ENCODE measurements at regions of chr2 and their contacts with region 1.

Region 1: GRCh38 chr2:98188351-98189049 is 101.5 kb downstream of the VWA3B start:
- DNase-seq: peak; percentile 91
- H3K4me3 ChIP-seq: no peak overlapping the region
- H3K27ac ChIP-seq: no peak overlapping the region
- H3K4me1 ChIP-seq: peaks cover 10% of the 10 kb centered on the region
- H3K27me3 ChIP-seq: no peaks in the 10 kb centered on the region
- CTCF ChIP-seq: peak; percentile 51 to 55

Region 2: DNA sequence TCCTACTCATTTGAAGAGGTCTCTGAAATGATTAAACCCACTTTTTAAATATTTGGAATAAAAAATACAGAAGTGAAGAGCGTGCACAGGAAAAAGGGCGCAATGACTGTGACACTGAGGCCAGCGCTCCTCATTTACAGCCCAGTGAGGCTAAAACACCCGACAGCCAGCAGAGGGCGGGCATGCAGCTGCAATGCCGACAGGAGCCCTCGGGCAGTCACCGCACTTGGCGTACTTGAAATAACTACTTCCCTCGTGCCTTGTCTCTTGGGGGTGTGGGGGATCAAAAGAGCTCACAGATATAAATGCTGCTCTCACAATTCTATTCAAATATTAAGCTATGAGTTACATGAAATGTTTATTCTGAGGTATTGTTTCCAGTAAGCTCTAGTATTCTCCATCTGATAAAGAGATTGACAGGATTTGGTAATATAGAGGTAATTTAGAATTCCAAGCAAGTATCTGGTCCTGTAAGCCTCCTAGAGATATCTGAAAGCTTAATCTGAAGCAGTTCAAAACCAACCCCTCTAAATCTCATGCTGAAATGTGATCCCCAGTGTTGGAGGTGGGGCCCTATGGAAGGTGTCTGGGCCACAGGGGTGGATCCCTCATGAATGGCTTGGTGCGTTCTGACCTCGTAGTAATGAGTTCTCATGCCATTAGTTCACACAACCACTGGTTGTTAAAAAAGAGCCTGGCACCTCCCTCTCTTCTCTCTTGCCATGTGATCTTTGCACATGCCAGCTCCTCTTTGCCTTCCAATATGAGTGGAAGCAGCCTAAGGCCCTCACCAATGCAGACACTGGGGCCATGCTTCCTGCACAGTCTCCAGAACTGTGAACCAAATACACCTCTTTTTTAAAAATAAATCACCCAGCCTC is 381.5 kb before region 1 on chr2:
- CTCF ChIA-PET with region 1: no interaction called
- dilution Hi-C with region 1: no loop called
- in situ Hi-C with region 1: loop called (anchors 5 to 10 kb)
- intact Hi-C with region 1: loop called (anchors 1 kb)
- DNase-seq: peak; percentile 45
- H3K4me3 ChIP-seq: no peak overlapping the region
- H3K27ac ChIP-seq: no peak overlapping the region
- H3K4me1 ChIP-seq: peaks cover 4% of the 10 kb centered on the region
- H3K27me3 ChIP-seq: no peaks in the 10 kb centered on the region
- CTCF ChIP-seq: peak; percentile 87 to 96

Region 3: GRCh38 chr2:97819754-97820153 is 368.7 kb before region 1 on chr2:
- CTCF ChIA-PET with region 1: no interaction called
- dilution Hi-C with region 1: no loop called
- in situ Hi-C with region 1: no loop called
- intact Hi-C with region 1: loop called (anchors 5 kb)
- DNase-seq: no peak
- H3K4me3 ChIP-seq: no peak overlapping the region
- H3K27ac ChIP-seq: no peak overlapping the region
- H3K4me1 ChIP-seq: no peaks in the 10 kb centered on the region
- H3K27me3 ChIP-seq: no peaks in the 10 kb centered on the region
- CTCF ChIP-seq: no peak

Region 4: GRCh38 chr2:97870396-97870843 is 318.1 kb before region 1 on chr2:
- CTCF ChIA-PET with region 1: no interaction called
- dilution Hi-C with region 1: no loop called
- in situ Hi-C with region 1: no loop called
- intact Hi-C with region 1: loop called (anchors 2 kb)
- DNase-seq: peak; percentile 82
- H3K4me3 ChIP-seq: no peak overlapping the region
- H3K27ac ChIP-seq: peak overlapping the region; percentile 85
- H3K4me1 ChIP-seq: peaks cover 42% of the 10 kb centered on the region
- H3K27me3 ChIP-seq: no peaks in the 10 kb centered on the region
- CTCF ChIP-seq: no peak

Region 5: GRCh38 chr2:98009887-98010760 is 178.4 kb before region 1 on chr2:
- CTCF ChIA-PET with region 1: no interaction called
- dilution Hi-C with region 1: loop called (anchors 10 kb)
- in situ Hi-C with region 1: no loop called
- intact Hi-C with region 1: no loop called
- DNase-seq: no peak
- H3K4me3 ChIP-seq: no peak overlapping the region
- H3K27ac ChIP-seq: no peak overlapping the region
- H3K4me1 ChIP-seq: peaks cover 7% of the 10 kb centered on the region
- H3K27me3 ChIP-seq: no peaks in the 10 kb centered on the region
- CTCF ChIP-seq: no peak

Region 6: DNA sequence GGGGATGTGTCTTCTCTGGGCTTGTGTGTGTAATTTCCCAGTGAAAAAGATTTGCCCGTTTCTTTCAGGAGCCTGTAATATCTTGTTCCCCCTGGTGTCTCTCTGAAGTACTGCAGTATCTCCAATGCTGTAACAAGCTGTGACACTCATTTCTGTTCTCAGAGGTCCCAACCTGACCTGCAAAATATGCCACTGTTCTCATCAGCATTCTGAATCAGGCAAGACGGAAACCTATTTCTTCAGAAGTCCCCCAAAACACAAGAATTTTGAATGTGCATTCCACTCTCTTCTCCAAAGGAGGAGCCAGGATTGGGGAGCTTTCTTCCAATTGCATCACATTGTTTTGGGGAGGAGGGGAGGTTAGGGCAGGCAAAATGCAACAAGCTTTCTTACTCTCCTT is 80.8 kb after region 1 on chr2:
- CTCF ChIA-PET with region 1: no interaction called
- dilution Hi-C with region 1: no loop called
- in situ Hi-C with region 1: no loop called
- intact Hi-C with region 1: loop called (anchors 10 kb)
- DNase-seq: peak; percentile 43
- H3K4me3 ChIP-seq: no peak overlapping the region
- H3K27ac ChIP-seq: no peak overlapping the region
- H3K4me1 ChIP-seq: no peaks in the 10 kb centered on the region
- H3K27me3 ChIP-seq: no peaks in the 10 kb centered on the region
- CTCF ChIP-seq: peak; percentile 78

Region 7: DNA sequence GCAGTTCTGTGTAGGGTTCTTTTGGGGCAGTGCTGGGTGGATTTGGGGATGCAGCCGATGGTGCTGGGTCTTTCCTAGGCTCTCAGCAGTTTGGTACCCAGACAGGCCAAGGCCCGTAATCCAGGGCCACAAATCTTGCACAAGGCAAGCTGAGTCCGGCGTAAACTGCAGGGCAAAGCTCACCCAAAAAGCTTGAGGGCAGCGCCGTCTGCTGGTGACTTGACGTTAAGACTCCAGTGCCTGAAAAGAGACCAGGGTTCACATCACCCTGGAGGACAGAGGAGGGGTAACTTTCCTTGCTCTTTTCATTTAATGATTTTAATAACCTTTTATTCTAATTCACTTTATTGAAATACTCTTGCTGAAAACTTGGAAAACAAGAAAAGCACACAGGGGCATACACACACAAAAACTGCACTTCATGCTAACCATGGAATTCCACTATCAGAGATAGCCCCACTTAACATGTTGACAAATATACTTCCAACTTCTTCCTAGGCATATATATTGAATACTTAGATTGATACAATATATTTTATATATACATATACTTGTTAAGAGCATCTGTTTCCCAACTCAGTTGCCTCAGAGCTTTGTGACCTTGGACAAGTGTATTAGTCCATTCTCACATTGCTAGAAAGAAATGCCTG is 196.7 kb after region 1 on chr2:
- CTCF ChIA-PET with region 1: no interaction called
- dilution Hi-C with region 1: no loop called
- in situ Hi-C with region 1: no loop called
- intact Hi-C with region 1: loop called (anchors 1 kb)
- DNase-seq: peak; percentile 64
- H3K4me3 ChIP-seq: no peak overlapping the region
- H3K27ac ChIP-seq: no peak overlapping the region
- H3K4me1 ChIP-seq: no peaks in the 10 kb centered on the region
- H3K27me3 ChIP-seq: peaks cover 9% of the 10 kb centered on the region
- CTCF ChIP-seq: peak; percentile 100

Measured in mammary epithelial cell (primary cell).